Panc1 (cell line): ENCODE measurements at regions of chr5 and their contacts with region 1.

Region 1: GRCh38 chr5:93078082-93079038 is 502.7 kb downstream of the NR2F1-AS1 start:
- DNase-seq: peak; percentile 97
- ATAC-seq: peak; percentile 98
- H3K4me3 ChIP-seq: peak overlapping the region; percentile 5 to 28
- H3K27ac ChIP-seq: peak overlapping the region; percentile 91
- H3K4me1 ChIP-seq: peaks cover 18% of the 10 kb centered on the region
- H3K27me3 ChIP-seq: no peaks in the 10 kb centered on the region
- CTCF ChIP-seq: no peak

Region 2: DNA sequence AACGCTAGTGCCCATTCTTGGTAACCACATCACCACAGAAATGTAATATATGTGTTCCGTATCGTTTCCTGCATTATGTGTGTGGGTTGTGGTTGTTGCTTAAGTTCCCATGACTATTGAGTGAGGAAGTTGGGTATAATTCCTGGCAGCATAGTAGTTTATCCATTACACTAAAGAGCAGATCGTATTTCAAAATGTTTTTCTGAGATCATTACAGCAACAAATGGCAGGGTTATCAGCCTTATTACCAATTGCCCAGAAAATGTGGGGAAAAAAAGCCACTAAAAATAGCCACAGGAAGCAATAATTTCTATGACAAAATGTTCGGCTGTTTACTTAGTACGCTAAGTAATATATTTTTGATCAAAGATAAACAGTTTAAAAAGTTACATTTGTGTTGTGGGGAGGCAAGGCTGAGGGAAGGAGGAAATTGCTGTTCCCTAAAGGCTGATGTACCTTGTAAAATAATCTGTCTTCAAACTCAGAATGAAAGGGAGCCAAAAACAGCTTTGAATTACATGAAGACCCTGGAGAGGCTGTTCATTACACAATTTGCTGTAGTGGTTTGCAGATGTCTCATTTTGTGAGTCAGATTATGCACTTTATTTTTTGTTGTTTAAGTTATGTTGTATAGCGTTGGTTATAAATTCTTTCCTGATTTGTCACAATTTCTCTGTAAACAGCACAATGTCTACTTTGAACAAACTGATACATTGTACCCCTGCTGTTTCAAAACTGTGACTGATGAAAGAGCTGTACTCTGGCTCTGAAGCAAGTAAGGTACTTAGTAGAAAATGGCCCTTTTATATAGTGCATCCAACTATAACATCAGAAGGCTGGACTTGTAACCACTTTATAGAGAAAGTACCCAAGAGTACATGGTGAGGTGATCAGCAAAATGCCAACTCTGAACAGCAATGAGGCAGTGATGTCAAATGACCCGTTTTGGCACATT is 525.9 kb before region 1 on chr5:
- CTCF ChIA-PET with region 1: no interaction called
- POLR2A ChIA-PET with region 1: no interaction called
- in situ Hi-C with region 1: no loop called
- intact Hi-C with region 1: loop called (anchors 10 kb)
- DNase-seq: peak; percentile 94
- ATAC-seq: peak; percentile 95
- H3K4me3 ChIP-seq: no peak overlapping the region
- H3K27ac ChIP-seq: peak overlapping the region; percentile 100
- H3K4me1 ChIP-seq: peaks cover 15% of the 10 kb centered on the region; the same call in 1 of the 2 replicates
- H3K27me3 ChIP-seq: no peaks in the 10 kb centered on the region
- CTCF ChIP-seq: no peak

Region 3: DNA sequence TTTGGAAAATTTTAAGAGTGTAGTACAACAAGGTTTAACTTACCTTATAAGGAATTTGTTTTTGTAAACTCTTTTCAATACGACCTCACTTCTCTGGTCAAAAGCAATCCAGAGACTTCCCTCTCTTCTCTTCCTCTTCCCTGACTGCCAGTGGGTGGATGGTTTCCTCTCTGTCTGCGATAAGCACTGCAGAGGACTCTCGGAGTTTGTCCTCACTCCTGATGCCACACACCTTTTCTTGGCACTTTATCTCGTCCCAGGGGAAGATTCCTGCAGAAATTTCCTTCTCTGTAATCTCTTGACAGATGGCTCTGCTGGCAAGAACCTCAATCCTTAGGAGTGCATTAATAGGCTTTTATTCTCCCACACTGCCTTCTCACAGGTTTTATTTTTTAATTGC is 138.9 kb before region 1 on chr5:
- CTCF ChIA-PET with region 1: no interaction called
- POLR2A ChIA-PET with region 1: no interaction called
- in situ Hi-C with region 1: no loop called
- intact Hi-C with region 1: loop called (anchors 10 kb)
- DNase-seq: no peak
- ATAC-seq: no peak
- H3K4me3 ChIP-seq: no peak overlapping the region
- H3K27ac ChIP-seq: peak overlapping the region; percentile 70; the same call in 1 of the 2 replicates
- H3K4me1 ChIP-seq: peaks cover 8% of the 10 kb centered on the region; the same call in 1 of the 2 replicates
- H3K27me3 ChIP-seq: no peaks in the 10 kb centered on the region
- CTCF ChIP-seq: no peak